Natural killer cell (primary cell): ENCODE measurements at regions of chr9 and their contacts with region 1.

Region 1: DNA sequence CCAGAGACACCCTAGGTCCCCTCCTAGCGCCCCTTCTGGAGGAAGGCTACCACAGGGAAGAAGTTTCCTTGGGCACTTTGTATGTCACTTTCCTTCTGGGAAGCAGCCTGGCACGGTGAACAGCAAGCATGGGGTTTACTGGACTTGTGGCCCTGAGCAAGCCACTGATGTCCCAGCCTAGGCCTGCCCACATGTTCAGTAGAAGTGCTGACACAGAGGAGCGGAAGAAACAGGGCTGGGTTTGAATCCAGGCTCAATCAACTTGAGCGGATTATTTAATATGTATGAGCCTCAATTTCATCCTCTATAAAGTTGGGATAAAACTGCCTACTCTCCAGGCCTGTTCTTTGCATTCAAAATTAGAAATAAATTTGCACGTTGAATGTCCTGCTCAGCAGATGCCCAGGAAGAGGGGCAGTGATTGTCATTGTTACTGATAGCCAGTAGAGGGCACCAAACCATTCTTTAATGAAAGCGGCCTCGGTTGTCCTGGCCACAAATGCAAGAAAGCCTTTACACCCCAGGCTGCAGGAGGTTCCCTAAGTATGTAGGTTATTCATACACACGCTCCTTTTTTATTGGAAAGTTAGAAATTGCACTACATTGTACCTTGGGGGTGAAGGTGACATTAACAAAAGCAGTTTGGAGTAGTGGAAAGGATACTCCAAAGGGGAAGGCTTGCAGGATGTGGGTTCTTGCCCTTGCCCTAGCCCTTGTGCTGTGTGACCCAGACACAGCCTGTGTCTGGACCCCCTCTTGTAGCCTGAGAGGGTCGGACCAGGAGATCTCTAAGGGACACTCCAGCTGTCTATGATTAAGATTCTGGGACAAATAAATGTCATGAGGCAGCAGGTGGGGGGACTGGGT is 13.4 kb upstream of the XPA start:
- DNase-seq: peak in 1 of 2 donors; percentile 83
- ATAC-seq: peak; percentile 82 to 94 (median 92)
- H3K4me3 ChIP-seq: no peak overlapping the region
- H3K4me3 Mint-ChIP-seq: peak overlapping the region; percentile 14
- H3K27ac ChIP-seq: no peak overlapping the region
- H3K27ac Mint-ChIP-seq: peak overlapping the region in 1 of 2 donors; percentile 40
- H3K4me1 ChIP-seq: peaks cover 15% of the 10 kb centered on the region
- H3K4me1 Mint-ChIP-seq: peaks cover 14 to 24% of the 10 kb centered on the region in 2 donors
- H3K27me3 ChIP-seq: no peaks in the 10 kb centered on the region
- H3K27me3 Mint-ChIP-seq: peaks cover 17 to 38% of the 10 kb centered on the region in 2 donors
- CTCF ChIP-seq: peak; percentile 86

Region 2: GRCh38 chr9:97906236-97906831 is 195.7 kb after region 1 on chr9:
- intact Hi-C with region 1: loop called (anchors 5 kb)
- DNase-seq: peak in 1 of 2 donors; percentile 70
- ATAC-seq: peak; percentile 36 to 68 (median 43)
- H3K4me3 ChIP-seq: no peak overlapping the region
- H3K4me3 Mint-ChIP-seq: peak overlapping the region; percentile 88
- H3K27ac ChIP-seq: peak overlapping the region; percentile 70
- H3K27ac Mint-ChIP-seq: peak overlapping the region; percentile 85 to 88
- H3K4me1 ChIP-seq: peaks cover 65% of the 10 kb centered on the region
- H3K4me1 Mint-ChIP-seq: peaks cover 60 to 62% of the 10 kb centered on the region in 2 donors
- H3K27me3 ChIP-seq: no peaks in the 10 kb centered on the region
- H3K27me3 Mint-ChIP-seq: no peaks in the 10 kb centered on the region
- CTCF ChIP-seq: no peak

Region 3: DNA sequence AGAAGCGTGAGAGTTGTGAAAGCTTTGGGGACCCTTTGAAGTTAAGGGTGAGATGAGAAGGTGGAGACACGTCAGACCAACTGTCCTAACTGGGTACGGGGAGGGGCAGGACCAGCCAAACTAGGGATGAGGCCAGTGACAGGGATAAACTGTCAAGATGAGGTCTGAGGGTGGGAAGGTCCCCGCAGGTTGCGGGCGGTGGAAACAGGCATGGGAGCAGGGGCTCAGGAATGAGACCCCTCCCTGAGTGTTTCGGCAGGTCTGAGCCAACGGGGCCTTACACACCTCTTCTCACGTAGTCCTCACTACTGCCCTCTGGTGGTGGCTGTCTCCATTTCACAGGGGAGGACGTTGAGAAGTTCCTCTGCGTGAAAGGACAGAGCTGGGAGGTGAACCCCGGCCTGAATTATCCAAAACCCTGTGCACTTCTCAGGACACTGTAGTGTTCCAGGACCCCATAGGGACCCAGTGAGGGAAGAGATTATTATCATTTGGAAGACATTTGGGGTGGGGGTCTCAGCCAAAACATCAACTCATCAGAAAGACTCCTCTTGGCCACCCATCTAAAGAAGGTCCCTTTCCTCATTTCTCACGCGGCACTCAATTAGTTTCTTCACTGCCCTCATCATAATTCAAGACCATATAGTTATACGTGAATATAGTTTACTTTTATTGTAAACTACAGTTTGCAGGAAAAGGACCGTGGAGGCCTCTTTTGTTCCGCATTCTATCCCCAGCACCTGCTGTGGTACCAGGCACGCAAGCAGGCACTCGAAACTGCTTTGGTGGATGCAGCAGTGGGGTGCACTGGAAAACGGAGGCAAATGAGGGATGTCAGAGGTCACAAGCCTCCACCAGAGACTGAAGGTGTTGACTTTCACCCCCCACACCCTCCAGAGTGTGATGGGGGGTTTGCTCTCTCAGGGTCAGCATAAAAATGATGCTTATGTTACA is 324.3 kb after region 1 on chr9:
- intact Hi-C with region 1: loop called (anchors 10 kb)
- DNase-seq: peak; percentile 82 to 97
- ATAC-seq: peak; percentile 96 to 100 (median 100)
- H3K4me3 ChIP-seq: no peak overlapping the region
- H3K4me3 Mint-ChIP-seq: no peak overlapping the region
- H3K27ac ChIP-seq: no peak overlapping the region
- H3K27ac Mint-ChIP-seq: peak overlapping the region in 1 of 2 donors; percentile 42
- H3K4me1 ChIP-seq: peaks cover 4% of the 10 kb centered on the region
- H3K4me1 Mint-ChIP-seq: peaks cover 7 to 9% of the 10 kb centered on the region in 2 donors
- H3K27me3 ChIP-seq: no peaks in the 10 kb centered on the region
- H3K27me3 Mint-ChIP-seq: peaks cover 0 to 5% of the 10 kb centered on the region in 2 donors
- CTCF ChIP-seq: peak; percentile 78

Region 4: DNA sequence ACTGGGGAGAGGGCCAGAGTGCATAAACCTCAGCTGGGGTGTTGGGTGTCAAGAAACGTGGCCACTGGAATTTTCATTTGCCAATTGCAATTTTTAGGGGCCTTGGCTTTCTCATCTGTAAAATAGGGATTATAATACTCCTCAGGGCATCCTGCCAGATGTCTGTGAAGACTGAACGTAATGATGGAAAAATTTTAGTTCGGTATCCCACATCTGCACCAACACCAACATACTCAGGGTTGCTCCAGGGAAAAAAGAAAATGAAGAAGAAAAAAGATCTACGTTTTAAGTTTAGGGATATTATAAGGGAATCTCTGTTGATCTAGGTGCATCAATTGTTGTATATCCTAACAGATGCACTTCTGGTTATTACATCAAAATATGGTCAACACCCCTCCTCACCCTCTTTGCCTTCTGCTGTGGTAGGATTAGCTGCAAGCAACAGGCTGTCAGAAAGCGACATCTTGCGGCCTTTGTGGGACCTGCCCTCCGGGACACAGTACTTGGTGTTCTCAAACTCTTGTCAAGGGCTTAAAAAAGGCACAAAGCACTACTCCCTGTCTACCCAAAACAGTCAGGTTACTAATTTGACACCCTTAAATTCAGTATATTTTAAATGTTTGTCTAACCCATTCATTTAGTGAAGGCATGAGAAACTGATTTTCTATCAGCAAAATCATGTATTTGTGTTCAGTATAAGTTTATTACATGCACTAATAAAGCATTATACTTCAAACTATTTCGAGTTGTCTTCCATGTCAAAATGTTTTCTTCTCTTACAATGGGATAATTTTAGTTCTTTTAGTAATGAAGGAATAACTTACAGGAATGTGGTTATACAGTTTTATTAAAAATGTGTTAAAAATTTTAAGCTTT is 553.1 kb after region 1 on chr9:
- intact Hi-C with region 1: loop called (anchors 5 kb)
- DNase-seq: peak; percentile 67 to 90
- ATAC-seq: peak; percentile 93 to 100 (median 100)
- H3K4me3 ChIP-seq: no peak overlapping the region
- H3K4me3 Mint-ChIP-seq: no peak overlapping the region
- H3K27ac ChIP-seq: no peak overlapping the region
- H3K27ac Mint-ChIP-seq: no peak overlapping the region
- H3K4me1 ChIP-seq: no peaks in the 10 kb centered on the region
- H3K4me1 Mint-ChIP-seq: no peaks in the 10 kb centered on the region
- H3K27me3 ChIP-seq: no peaks in the 10 kb centered on the region
- H3K27me3 Mint-ChIP-seq: peaks cover under 1 to 12% of the 10 kb centered on the region in 2 donors
- CTCF ChIP-seq: peak; percentile 94